Posterior vena cava (tissue), 2 donors: ENCODE measurements at regions of chr1 and their contacts with region 1.

Region 1: DNA sequence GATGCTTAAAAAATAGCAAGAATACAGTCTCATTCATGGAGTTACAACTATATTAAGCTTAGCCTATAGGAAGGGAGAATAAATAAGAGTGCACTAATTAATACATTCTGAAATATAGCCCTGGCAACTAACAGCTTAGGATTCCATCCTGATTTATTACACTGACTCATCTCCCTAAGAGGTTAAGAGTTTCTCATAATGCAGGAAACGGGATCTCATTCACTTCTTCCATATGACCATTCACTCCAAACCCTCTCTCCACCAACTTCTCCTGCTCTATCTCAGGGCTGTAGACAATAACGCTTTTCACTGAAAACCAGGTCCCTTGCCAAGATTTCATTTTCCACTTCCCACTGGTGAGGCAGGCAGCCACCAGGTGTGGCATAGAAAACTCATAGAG is 168.5 kb upstream of the PLD5 start:
- DNase-seq: no peak

Region 2: GRCh38 chr1:242728696-242729095 is 35.7 kb after region 1 on chr1:
- intact Hi-C with region 1: loop called in 1 of 2 experiments (anchors 1 kb)
- DNase-seq: no peak

Region 3: DNA sequence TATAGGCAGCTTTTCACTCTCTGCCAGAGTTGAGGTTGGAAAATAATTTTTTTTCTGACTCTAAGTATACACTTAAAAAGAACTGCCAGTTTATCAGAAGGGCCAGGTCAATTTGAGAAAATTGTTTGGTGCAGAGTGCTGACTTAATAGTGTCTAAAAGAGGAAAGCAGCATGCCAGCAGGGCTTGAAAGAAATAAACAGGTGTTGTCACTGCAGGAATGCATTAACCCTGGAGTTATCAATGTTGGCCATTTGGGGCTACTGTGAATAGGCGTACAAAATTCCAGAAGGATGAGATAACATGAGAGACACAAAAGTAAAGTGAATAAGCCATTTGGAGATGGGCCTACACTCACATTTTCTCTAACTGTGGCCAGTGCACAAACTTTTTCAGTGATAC is 52.1 kb after region 1 on chr1:
- intact Hi-C with region 1: no loop called
- DNase-seq: no peak